ENCODE measurements at regions of chr1 and their contacts with region 1.

Region 1: DNA sequence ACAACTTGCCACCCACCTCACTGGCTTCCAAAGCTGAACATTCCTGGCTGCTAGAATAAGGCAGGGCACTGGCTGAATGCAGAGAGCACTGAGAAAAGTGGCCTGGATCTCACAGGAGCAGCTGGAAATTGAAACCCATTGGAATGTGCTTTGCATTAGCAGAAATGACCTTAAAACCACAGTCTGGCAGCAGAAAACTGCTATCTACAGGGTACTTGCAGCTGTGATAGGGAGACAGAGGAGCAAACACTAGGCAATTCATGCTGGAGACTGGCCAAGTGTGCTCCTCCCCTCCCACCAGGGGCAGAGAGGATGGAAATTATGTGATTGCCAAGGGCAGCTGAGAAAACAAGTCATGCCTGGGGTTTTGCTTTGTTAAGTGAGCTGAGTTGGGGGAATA is 47.2 kb downstream of the HSD3B1 start:
- DNase-seq: no peak
- H3K4me3 ChIP-seq: no peak overlapping the region
- H3K27ac ChIP-seq: no peak overlapping the region
- H3K4me1 ChIP-seq: no peaks in the 10 kb centered on the region
- H3K27me3 ChIP-seq: no peaks in the 10 kb centered on the region
- CTCF ChIP-seq: no peak
- POLR2A ChIP-seq: no peak

Region 2: GRCh38 chr1:119539636-119540035 is 14.5 kb before region 1 on chr1:
- intact Hi-C with region 1: loop called (anchors 1 kb)
- DNase-seq: no peak
- H3K4me3 ChIP-seq: no peak overlapping the region
- H3K27ac ChIP-seq: no peak overlapping the region
- H3K4me1 ChIP-seq: no peaks in the 10 kb centered on the region
- H3K27me3 ChIP-seq: no peaks in the 10 kb centered on the region
- CTCF ChIP-seq: no peak
- POLR2A ChIP-seq: no peak

Measured in breast epithelium (tissue), 4 donors.